Posterior vena cava (tissue), 2 donors: ENCODE measurements at regions of chr12 and their contacts with region 1.

Region 1: DNA sequence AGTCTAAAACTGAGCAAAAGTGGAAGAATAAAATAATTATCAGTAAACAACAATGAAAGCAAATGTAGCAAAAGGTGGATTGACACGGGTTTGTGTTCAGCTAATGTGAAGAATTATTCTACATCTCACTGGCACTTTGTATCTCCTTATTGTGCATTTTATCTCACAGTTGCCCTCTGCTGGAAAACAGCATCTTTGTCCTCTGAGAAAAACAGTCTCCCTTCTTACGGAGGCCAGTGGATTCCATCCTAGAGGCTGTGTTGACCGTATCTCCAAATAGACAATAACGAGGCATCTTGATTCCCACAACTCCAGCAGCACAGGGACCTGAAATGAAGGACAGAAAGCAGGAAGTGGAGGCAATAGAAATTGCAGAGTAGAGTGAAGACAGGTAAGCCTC is 51.3 kb upstream of the PLBD1 start:
- DNase-seq: no peak

Region 2: GRCh38 chr12:14239935-14240872 is 378.8 kb before region 1 on chr12:
- intact Hi-C with region 1: loop called in 1 of 2 experiments (anchors 10 kb)
- DNase-seq: no peak

Region 3: DNA sequence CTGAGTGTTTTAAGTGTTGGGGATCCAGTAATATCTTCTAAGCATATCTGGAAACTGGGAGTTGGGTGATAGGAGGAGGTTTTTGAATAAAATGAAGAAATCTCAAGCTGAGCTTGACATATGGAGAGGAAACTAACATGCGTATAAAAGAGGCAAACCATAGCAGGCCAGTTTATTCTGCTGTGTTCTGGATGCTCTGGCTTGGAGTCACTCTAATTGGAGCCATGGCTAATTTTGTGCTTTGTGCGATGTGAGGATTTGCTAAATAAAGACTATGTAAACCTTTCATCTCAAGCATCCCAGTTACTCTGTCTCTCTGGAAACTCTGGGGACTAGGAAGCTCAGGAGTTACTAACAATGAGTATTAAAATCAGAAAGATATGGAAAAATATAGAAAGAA is 187.0 kb before region 1 on chr12:
- intact Hi-C with region 1: no loop called
- DNase-seq: no peak

Region 4: DNA sequence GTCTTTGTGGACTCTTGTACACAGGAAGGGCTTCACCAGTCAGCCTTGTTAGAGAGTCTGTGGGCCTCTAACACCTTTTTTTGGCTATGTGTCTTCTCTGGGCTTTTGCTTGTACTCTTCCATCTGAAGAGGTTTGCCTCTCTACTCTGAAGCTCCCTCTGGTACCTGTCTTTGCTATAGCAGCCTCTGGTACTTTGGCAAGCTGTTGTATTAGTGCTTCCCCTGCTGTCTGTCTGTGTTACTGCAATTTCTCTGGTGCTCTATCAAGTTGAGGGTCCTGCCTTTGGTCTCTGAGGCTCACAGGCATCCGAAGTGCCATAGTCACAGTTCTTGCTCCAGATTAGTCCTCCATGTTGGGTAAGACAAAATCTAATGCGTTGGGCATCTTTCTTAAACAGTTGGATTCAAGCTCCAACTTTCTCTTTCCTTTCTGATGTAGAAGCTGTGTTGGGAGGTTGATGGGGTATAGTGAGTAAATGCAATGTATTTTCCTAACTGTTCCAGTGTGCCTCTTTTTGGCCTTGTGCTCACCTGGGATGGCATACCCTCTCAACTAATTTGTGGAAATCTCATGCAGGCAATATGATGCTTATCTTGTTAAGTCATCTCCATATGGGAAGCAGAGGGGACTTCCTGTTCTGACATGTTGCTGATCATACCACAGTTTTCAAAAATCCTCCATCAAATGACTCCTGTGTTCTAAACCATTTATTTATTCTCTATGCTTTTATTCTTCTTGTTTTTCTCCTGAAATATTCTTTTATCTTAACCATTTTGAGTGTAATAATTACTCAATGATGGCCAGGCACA is 164.7 kb before region 1 on chr12:
- intact Hi-C with region 1: loop called in 1 of 2 experiments (anchors 5 kb)
- DNase-seq: no peak